ENCODE measurements at regions of chr7 and their contacts with region 1.

Region 1: GRCh38 chr7:50679218-50680007 is 103.3 kb downstream of the GRB10 start:
- DNase-seq: no peak
- ATAC-seq: peak; percentile 75

Region 2: DNA sequence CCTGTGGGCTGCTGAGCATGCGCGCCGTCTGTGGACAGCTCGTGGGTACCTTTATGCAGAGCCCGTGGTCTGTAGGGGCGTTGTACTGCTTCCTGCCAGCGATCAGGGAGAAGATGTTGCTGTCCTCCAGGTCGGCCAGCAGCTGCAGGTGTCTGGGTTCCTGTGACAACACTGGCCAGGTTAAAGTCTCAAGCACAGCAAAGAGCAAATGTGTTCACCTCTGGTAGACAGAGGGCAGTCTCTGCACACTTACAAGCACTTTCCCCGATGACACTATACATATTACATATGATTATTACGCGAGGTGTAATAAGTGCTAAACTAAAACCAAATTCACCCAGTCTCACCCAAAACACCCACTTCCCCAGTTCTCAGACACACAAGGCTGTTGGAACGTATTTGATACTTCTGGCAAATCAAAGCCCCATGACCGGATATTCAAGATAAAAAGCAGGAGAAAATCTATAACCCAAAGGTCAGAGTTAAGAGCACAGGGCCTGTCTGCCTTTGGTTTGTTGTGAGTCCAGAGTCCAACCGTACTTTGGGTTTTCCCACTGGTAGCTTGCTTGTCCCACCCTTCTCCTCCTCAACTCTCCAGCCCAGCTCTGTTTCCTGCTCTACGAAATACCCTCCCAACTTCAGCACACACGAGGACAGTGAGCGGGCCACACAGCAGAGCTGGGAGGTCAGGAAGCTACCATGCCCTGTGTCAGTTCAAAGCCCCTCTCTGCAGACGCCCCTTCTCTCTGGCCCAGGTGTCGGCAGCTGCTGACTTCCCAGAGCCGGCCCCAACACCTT is 64.5 kb before region 1 on chr7:
- intact Hi-C with region 1: loop called (anchors 1 kb)
- DNase-seq: no peak
- ATAC-seq: peak; percentile 47

Region 3: GRCh38 chr7:50857804-50858489 is 178.5 kb after region 1 on chr7:
- intact Hi-C with region 1: no loop called
- DNase-seq: no peak
- ATAC-seq: no peak

Region 4: DNA sequence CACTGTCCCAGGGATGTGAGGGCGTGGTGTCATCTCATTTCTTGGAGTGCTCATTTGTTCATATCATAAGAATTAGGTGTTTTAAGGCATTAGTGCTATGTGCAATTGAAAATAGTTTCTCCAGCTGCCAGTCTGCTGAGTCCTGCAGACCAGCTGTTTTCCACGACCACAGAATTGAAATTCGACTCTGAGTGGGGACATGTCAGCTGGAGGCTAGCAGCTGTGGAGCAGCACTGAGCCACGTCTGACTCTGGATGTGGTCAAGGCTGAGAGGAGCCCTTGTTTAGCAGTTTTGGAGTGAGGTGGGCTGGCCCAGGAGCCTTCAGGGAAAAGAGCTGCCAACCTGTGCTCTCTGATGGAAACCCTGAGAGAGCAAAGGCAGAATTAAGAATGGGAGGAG is 259.6 kb after region 1 on chr7:
- intact Hi-C with region 1: no loop called
- DNase-seq: no peak
- ATAC-seq: no peak

Region 5: DNA sequence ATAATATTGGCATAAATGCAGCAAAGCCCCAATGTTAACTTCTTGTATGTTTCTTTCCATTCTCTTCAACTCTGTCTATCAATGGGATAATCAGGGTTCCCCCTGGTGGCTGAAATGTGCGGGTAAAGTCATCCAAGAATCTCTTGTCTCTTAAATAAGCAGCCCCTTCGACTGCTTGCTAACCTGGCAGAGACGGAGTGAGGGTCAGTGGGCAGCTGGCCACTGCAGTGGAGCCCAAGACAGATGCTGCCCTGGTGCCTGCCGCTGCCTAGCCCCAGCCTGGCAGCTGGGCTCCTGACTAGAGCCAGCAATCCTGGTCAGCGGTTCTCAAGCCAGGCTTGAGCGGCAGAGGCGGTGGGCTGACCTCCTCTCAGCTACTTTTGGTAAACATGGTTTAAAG is 388.3 kb after region 1 on chr7:
- intact Hi-C with region 1: loop called (anchors 10 kb)
- DNase-seq: no peak
- ATAC-seq: peak; percentile 23